ENCODE measurements at regions of chr16 and their contacts with region 1.

Region 1: GRCh38 chr16:58011652-58012051 is 10.4 kb downstream of the USB1 start:
- DNase-seq: no peak
- ATAC-seq: no peak
- H3K4me3 ChIP-seq: no peak overlapping the region
- H3K27ac ChIP-seq: no peak overlapping the region
- H3K4me1 ChIP-seq: no peaks in the 10 kb centered on the region
- H3K27me3 ChIP-seq: no peaks in the 10 kb centered on the region
- CTCF ChIP-seq: no peak
- POLR2A ChIP-seq: no peak

Region 2: GRCh38 chr16:57764341-57765159 is 247.1 kb before region 1 on chr16:
- intact Hi-C with region 1: loop called in 1 of 2 experiments (anchors 10 kb)
- DNase-seq: no peak
- ATAC-seq: peak; percentile 33 to 68 (median 52)
- H3K4me3 ChIP-seq: no peak overlapping the region
- H3K27ac ChIP-seq: no peak overlapping the region
- H3K4me1 ChIP-seq: no peaks in the 10 kb centered on the region
- H3K27me3 ChIP-seq: no peaks in the 10 kb centered on the region
- CTCF ChIP-seq: no peak
- POLR2A ChIP-seq: no peak

Region 3: GRCh38 chr16:58336332-58337089 is 324.9 kb after region 1 on chr16:
- intact Hi-C with region 1: no loop called
- DNase-seq: peak; percentile 72 to 84 (median 81)
- ATAC-seq: peak; percentile 97 to 100 (median 98)
- H3K4me3 ChIP-seq: peak overlapping the region; percentile 6 to 34 (median 27)
- H3K27ac ChIP-seq: no peak overlapping the region
- H3K4me1 ChIP-seq: peaks cover 0 to 6% (median 0%) of the 10 kb centered on the region in 4 donors
- H3K27me3 ChIP-seq: no peaks in the 10 kb centered on the region
- CTCF ChIP-seq: peak; percentile 85 to 96 (median 96)
- POLR2A ChIP-seq: no peak

Measured in right lobe of liver (tissue), 6 donors.